Gastrocnemius medialis (tissue), 4 donors: ENCODE measurements at regions of chr17 and their contacts with region 1.

Region 1: GRCh38 chr17:82424001-82424862 is 5.8 kb upstream of the OGFOD3 start:
- DNase-seq: peak in 1 of 2 donors; percentile 47
- ATAC-seq: peak; percentile 55 to 72
- H3K4me3 ChIP-seq: peak overlapping the region in 1 of 4 donors; percentile 17
- H3K27ac ChIP-seq: peak overlapping the region in 2 of 4 donors; percentile 53 to 57
- H3K4me1 ChIP-seq: peaks cover 3 to 5% of the 10 kb centered on the region in 2 donors
- H3K27me3 ChIP-seq: no peaks in the 10 kb centered on the region
- CTCF ChIP-seq: peak in 2 of 5 experiments; percentile 5 to 49
- POLR2A ChIP-seq: no peak

Region 2: GRCh38 chr17:82351716-82352488 is 72.3 kb before region 1 on chr17:
- in situ Hi-C with region 1: loop called in 2 of 4 experiments (anchors 5 to 10 kb)
- intact Hi-C with region 1: no loop called
- DNase-seq: peak; percentile 62 to 72
- ATAC-seq: peak; percentile 74 to 88
- H3K4me3 ChIP-seq: no peak overlapping the region
- H3K27ac ChIP-seq: no peak overlapping the region
- H3K4me1 ChIP-seq: no peaks in the 10 kb centered on the region
- H3K27me3 ChIP-seq: peaks cover 8 to 21% (median 13%) of the 10 kb centered on the region in 3 donors
- CTCF ChIP-seq: peak; percentile 89 to 98 (median 97)
- POLR2A ChIP-seq: no peak

Region 3: GRCh38 chr17:82461827-82462524 is 37.7 kb after region 1 on chr17:
- in situ Hi-C with region 1: no loop called
- intact Hi-C with region 1: no loop called
- DNase-seq: no peak
- ATAC-seq: no peak
- H3K4me3 ChIP-seq: no peak overlapping the region
- H3K27ac ChIP-seq: no peak overlapping the region
- H3K4me1 ChIP-seq: peaks cover 15 to 17% of the 10 kb centered on the region in 2 donors
- H3K27me3 ChIP-seq: no peaks in the 10 kb centered on the region
- CTCF ChIP-seq: no peak
- POLR2A ChIP-seq: no peak